A673 (cell line): ENCODE measurements at regions of chr12 and their contacts with region 1.

Region 1: DNA sequence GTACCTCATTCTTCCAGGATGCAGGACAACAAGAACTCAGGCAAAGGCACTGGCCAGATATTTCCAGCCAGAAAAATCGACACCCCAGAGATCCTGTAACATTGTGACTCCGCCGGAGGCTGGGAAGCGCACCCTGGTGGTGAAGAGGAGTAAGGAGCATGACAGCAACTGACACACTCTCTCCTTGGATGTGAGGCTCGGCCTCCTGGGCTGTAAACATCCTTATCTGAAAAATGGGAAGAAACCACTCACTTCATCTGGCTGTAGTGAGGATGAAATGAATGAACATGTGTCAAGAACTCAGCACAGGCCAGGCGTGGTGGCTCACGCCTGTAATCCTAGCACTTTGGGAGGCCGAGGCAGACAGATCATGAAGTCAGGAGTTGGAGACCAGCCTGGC is 27.5 kb downstream of the TCHP start:
- DNase-seq: peak; percentile 63
- H3K4me3 ChIP-seq: no peak overlapping the region
- H3K27ac ChIP-seq: no peak overlapping the region
- H3K4me1 ChIP-seq: no peaks in the 10 kb centered on the region
- H3K27me3 ChIP-seq: no peaks in the 10 kb centered on the region
- CTCF ChIP-seq: peak; percentile 73

Region 2: DNA sequence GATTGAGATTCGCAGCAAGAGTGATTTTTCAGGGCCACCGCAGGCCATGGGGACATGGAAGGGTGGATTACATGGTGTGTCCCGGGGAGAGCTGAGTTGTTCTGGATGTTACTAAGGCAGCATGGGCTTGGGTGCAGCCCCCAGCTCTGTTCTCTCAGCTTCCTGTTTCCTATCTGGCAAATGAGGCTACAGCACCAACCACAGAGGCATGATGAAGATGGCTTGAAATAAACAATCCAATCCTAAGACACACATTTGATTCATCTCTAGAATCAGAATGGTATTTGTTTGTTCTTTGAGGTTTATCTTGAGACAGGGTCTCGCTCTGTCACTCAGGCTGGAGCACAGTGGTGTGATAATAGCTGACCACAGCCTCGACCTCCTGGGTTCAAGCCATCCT is 68.9 kb before region 1 on chr12:
- CTCF ChIA-PET with region 1: interaction called, 4 read pairs
- POLR2A ChIA-PET with region 1: no interaction called
- intact Hi-C with region 1: loop called (anchors 1 kb)
- DNase-seq: no peak
- H3K4me3 ChIP-seq: no peak overlapping the region
- H3K27ac ChIP-seq: no peak overlapping the region
- H3K4me1 ChIP-seq: no peaks in the 10 kb centered on the region
- H3K27me3 ChIP-seq: no peaks in the 10 kb centered on the region
- CTCF ChIP-seq: no peak